ENCODE measurements at regions of chr1 and their contacts with region 1.

Region 1: DNA sequence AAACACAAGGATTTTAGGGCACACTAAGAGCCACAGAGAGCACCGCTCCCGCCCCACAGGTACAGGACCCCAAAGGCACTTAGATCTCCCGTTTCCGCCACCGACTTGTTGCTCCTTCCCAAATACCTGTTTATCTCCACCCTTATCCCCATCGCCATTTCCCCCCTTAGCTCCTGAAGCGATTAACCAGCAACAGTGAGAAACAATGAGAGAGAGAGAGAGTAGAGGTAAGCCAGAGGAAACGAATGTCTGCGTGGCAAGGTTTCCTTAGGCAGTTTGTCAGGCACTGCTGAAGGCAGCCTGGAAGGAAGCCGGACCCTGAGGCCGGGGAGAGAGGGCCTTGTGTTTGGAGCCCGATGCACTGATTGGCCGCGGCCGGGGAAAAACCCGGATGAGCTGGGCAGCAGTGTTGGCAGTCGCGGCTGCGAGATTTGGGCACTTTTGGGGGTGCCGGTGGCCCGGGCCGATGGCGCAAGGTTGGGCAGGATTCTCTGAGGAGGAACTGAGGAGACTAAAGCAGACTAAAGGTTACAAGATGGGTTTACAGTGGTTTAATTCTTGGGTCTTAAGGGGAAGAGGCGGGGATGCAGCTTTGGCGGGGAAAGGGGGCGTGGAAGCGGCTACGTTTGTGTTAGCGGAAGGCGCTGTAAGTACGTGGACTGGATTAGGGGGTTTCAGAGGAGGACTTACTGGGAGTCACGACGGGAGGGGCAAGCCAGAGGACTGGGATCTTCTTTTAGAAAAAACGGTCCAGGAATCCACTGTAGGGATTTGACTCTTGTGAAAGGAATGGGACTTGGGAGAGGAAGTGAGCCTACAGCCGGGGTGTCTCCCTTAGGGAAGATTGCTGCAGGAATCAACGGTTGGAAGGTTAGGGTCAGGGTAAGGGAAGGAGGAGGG is at the start of gene GORAB:
- DNase-seq: peak; percentile 93
- H3K4me3 Mint-ChIP-seq: no peak within 1 kb of the TSS
- H3K27ac Mint-ChIP-seq: no peak within 1 kb of the TSS
- H3K4me1 Mint-ChIP-seq: peaks cover 20% of the 10 kb centered on the region
- H3K27me3 Mint-ChIP-seq: no peaks in the 10 kb centered on the region
- CTCF ChIP-seq: no peak
- total RNA-seq, gene GORAB: 20.5 and 20.9 TPM in 2 replicates

Region 2: DNA sequence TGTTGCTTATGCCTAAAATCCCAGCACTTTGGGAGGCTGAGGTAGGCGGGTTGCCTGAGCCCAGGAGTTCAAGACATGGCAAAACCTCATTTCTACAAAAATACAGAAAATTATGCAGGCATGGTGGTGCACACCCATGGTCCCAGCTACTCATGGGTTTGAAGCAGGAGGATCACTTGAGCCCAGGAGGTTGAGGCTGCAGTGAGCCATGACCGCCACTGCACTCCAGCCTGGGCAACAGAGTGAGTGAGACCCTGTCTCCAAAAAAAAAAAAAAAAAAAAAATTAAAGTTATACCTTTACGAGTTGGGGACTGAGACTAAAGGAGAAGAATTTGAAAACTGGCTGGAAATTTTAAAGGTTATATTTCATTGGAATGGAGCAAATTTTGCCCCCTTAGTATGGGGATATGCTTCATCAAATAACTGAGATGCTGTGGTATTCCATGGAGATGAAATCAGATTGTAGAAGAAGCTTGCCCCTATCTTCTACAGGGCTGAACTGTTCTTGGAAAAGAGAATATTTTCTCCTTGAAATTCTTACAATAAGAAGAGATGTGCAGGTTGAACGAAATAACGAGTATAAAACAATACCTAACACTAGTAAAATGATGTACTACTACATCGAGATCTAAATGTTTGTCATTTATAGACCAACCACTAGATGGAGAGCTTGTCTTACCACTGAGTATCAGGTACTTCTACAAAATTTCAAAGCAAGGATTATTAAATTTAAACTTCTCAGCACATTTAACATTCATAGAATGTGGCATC is 603.4 kb before region 1 on chr1:
- CTCF ChIA-PET with region 1: no interaction called
- intact Hi-C with region 1: loop called (anchors 10 kb)
- DNase-seq: no peak
- H3K4me3 Mint-ChIP-seq: no peak overlapping the region
- H3K27ac Mint-ChIP-seq: no peak overlapping the region
- H3K4me1 Mint-ChIP-seq: peaks cover 15% of the 10 kb centered on the region
- H3K27me3 Mint-ChIP-seq: no peaks in the 10 kb centered on the region
- CTCF ChIP-seq: peak; percentile 53

Region 3: DNA sequence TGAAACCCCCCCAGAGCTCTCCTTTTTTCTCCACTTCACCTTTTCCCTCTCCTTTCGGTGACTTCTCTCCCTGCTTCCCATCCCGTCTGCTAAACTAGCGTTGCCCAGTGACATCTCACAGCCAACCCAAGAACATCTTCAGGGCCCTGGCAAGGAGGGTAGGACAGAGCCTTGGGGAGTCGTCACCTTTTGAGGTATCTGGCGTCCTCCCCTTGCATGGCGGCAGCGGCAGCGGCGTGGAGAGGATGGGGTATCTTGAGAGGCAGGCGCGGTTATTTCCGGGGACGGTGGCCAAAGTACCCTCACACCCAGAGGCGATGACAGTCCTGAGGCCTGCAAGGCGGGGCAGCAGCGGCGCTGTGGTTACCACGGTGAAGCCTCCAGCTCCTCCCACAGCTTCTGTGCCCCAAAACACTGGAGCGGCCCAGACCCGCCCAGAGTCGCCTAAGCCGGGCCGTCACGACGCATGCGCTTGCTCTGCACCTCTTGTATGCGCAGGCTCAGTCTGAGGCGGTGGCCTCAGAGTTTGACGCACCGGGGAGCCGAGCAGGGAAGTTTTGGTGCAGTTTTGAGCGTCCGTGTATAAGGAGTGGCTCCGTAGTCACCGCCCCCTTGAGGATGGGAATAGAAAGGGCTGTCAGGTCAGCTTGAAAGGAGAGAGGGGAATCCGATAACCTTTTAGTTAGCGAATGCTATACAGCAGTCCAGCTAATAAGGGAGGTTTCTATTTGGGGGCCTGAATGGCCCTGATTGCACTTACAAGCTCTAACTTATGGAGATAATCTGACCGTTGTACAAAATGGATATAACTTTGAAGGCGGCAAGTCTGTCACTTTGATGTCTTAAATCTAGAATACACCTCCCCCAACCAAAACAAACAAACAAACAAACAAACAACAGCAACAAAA is 457.5 kb before region 1 on chr1 and contains the start of gene KIFAP3:
- CTCF ChIA-PET with region 1: no interaction called
- intact Hi-C with region 1: loop called (anchors 10 kb)
- DNase-seq: peak; percentile 97
- H3K4me3 Mint-ChIP-seq: peak within 1 kb of the TSS; percentile 90
- H3K27ac Mint-ChIP-seq: peak within 1 kb of the TSS; percentile 81
- H3K4me1 Mint-ChIP-seq: peaks cover 23% of the 10 kb centered on the region
- H3K27me3 Mint-ChIP-seq: no peaks in the 10 kb centered on the region
- CTCF ChIP-seq: no peak
- total RNA-seq, gene KIFAP3: 16.2 and 16.5 TPM in 2 replicates

Region 4: GRCh38 chr1:170133766-170134495 is 398.1 kb before region 1 on chr1:
- CTCF ChIA-PET with region 1: no interaction called
- intact Hi-C with region 1: no loop called
- DNase-seq: no peak
- H3K4me3 Mint-ChIP-seq: no peak overlapping the region
- H3K27ac Mint-ChIP-seq: no peak overlapping the region
- H3K4me1 Mint-ChIP-seq: no peaks in the 10 kb centered on the region
- H3K27me3 Mint-ChIP-seq: no peaks in the 10 kb centered on the region
- CTCF ChIP-seq: no peak

Region 5: GRCh38 chr1:170471398-170472053 is 60.5 kb before region 1 on chr1:
- CTCF ChIA-PET with region 1: no interaction called
- intact Hi-C with region 1: no loop called
- DNase-seq: no peak
- H3K4me3 Mint-ChIP-seq: no peak overlapping the region
- H3K27ac Mint-ChIP-seq: no peak overlapping the region
- H3K4me1 Mint-ChIP-seq: no peaks in the 10 kb centered on the region
- H3K27me3 Mint-ChIP-seq: no peaks in the 10 kb centered on the region
- CTCF ChIP-seq: no peak

Region 6: GRCh38 chr1:170494369-170494768 is 37.6 kb before region 1 on chr1:
- CTCF ChIA-PET with region 1: no interaction called
- intact Hi-C with region 1: loop called (anchors 2 kb)
- DNase-seq: peak; percentile 56
- H3K4me3 Mint-ChIP-seq: peak overlapping the region; percentile 56
- H3K27ac Mint-ChIP-seq: peak overlapping the region; percentile 85
- H3K4me1 Mint-ChIP-seq: peaks cover 22% of the 10 kb centered on the region
- H3K27me3 Mint-ChIP-seq: no peaks in the 10 kb centered on the region
- CTCF ChIP-seq: no peak

Measured in Calu3 (cell line).